GM12878 (cell line): ENCODE measurements at regions of chr2 and their contacts with region 1.

Region 1: GRCh38 chr2:6109831-6110230 is 417.6 kb downstream of the SOX11 start:
- DNase-seq: no peak
- ATAC-seq: no peak
- H3K4me3 ChIP-seq: no peak overlapping the region
- H3K27ac ChIP-seq: no peak overlapping the region
- H3K4me1 ChIP-seq: no peaks in the 10 kb centered on the region
- H3K27me3 ChIP-seq: no peaks in the 10 kb centered on the region
- CTCF ChIP-seq: no peak
- EP300 ChIP-seq: no peak
- POLR2A ChIP-seq: no peak
- RAD21 ChIP-seq: no peak

Region 2: DNA sequence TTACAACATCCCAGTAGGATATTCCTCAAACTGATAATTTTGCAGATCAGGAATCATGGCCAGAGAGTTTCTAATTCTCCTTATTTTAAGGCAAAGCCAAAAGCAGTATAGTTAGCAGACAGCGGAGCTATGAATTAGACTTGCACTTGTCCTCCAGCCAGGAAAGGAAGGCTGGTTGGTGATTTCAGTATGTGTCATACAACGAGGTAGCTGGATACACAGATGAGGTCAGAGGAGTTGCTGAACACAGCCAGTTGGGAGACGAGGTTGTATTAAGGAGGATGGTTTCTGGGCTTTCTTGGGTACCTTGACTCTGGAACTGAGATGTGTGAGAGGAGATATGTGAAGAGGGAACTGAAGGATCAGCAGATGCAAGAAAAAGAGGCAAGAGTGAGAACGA is 232.5 kb before region 1 on chr2:
- CTCF ChIA-PET with region 1: no interaction called
- POLR2A ChIA-PET with region 1: no interaction called
- RAD21 ChIA-PET with region 1: no interaction called
- SMC1A ChIA-PET with region 1: no interaction called
- in situ Hi-C with region 1: no loop called
- intact Hi-C with region 1: no loop called
- DNase-seq: no peak
- ATAC-seq: no peak
- H3K4me3 ChIP-seq: no peak overlapping the region
- H3K27ac ChIP-seq: no peak overlapping the region
- H3K4me1 ChIP-seq: no peaks in the 10 kb centered on the region
- H3K27me3 ChIP-seq: no peaks in the 10 kb centered on the region
- CTCF ChIP-seq: no peak
- EP300 ChIP-seq: no peak
- POLR2A ChIP-seq: no peak
- RAD21 ChIP-seq: no peak

Region 3: GRCh38 chr2:6526093-6526824 is 416.4 kb after region 1 on chr2:
- CTCF ChIA-PET with region 1: no interaction called
- POLR2A ChIA-PET with region 1: no interaction called
- RAD21 ChIA-PET with region 1: no interaction called
- SMC1A ChIA-PET with region 1: no interaction called
- in situ Hi-C with region 1: no loop called
- intact Hi-C with region 1: loop called (anchors 5 kb)
- DNase-seq: peak; percentile 9
- ATAC-seq: peak; percentile 52; the same call in 2 of the 3 replicates
- H3K4me3 ChIP-seq: no peak overlapping the region
- H3K27ac ChIP-seq: no peak overlapping the region
- H3K4me1 ChIP-seq: no peaks in the 10 kb centered on the region
- H3K27me3 ChIP-seq: no peaks in the 10 kb centered on the region
- CTCF ChIP-seq: peak; percentile 54 to 61 (median 54); a peak in 5 of 6 replicates
- EP300 ChIP-seq: no peak
- POLR2A ChIP-seq: no peak
- RAD21 ChIP-seq: peak; percentile 79